ENCODE measurements at regions of chr10 and their contacts with region 1.

Region 1: DNA sequence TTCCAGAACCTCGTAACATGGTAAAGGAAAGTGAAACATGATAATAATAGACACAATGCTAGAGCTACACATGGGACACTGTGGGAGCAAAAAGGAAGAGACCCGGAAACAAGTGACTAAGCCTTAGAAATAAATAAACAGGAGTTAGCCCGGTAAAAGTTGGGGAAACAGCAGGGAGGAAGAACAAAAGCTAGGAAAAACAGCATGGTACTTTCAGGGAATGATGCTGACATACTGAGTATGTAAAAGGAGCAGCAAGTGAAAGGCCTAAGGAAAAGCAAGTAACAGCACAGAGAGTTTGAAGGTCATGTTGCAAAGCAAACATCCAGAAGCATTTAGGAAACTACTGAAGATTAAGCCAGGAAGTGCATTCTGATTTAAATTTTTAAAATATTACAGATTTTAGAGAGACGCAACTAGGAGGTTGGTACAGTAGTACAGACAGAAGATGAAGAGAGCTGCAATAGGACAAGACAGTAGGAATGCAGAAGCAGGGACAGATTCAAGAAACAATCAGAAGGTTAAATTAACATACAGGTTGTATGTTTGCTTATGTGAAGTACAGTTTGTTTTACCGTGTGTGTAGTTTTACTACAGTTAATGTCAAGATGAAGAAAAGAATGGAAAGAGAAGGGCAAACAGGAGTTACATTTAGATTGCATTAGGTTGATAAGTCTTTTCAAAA is 63.7 kb downstream of the ARHGAP12 start:
- DNase-seq: no peak
- H3K4me3 Mint-ChIP-seq: no peak overlapping the region
- H3K27ac Mint-ChIP-seq: no peak overlapping the region
- H3K4me1 Mint-ChIP-seq: peaks cover 18% of the 10 kb centered on the region
- H3K27me3 Mint-ChIP-seq: no peaks in the 10 kb centered on the region

Region 2: DNA sequence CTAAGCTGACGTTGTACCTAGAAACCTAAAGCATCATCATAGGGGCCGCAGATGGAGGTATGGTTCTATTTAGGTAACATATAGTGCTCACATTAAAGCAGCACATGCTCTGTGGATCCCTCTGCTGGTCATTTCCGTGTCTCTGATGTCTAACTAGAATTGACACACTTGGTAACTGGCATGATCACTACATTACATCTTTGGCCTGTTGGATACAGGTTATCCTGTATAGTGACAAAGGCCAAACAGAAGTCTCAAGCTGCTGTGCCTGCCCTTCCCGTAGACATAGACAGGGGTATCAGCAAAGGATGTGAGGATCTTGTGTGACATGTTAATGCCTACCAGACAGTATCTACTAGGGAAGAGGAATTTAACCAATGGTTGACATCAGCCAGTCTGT is 140.1 kb after region 1 on chr10:
- CTCF ChIA-PET with region 1: interaction called, 77 read pairs
- POLR2A ChIA-PET with region 1: no interaction called
- intact Hi-C with region 1: loop called (anchors 1 kb)
- DNase-seq: peak; percentile 38
- H3K4me3 Mint-ChIP-seq: no peak overlapping the region
- H3K27ac Mint-ChIP-seq: no peak overlapping the region
- H3K4me1 Mint-ChIP-seq: peaks cover 4% of the 10 kb centered on the region
- H3K27me3 Mint-ChIP-seq: no peaks in the 10 kb centered on the region

Region 3: GRCh38 chr10:32207544-32207943 is 342.6 kb after region 1 on chr10:
- CTCF ChIA-PET with region 1: interaction called, 3 read pairs
- POLR2A ChIA-PET with region 1: no interaction called
- intact Hi-C with region 1: loop called (anchors 5 kb)
- DNase-seq: peak; percentile 74
- H3K4me3 Mint-ChIP-seq: no peak overlapping the region
- H3K27ac Mint-ChIP-seq: no peak overlapping the region
- H3K4me1 Mint-ChIP-seq: peaks cover 3% of the 10 kb centered on the region
- H3K27me3 Mint-ChIP-seq: peaks cover 3% of the 10 kb centered on the region

Measured in activated CD4-positive, alpha-beta memory T cell treated with anti-CD3 and anti-CD28 coated beads for 36 hours (primary cell).